Psoas muscle (tissue), 8 donors: ENCODE measurements at regions of chr18 and their contacts with region 1.

Region 1: GRCh38 chr18:13221869-13222855 is 3.6 kb downstream of the LDLRAD4 start:
- DNase-seq: peak; percentile 67 to 82
- ATAC-seq: peak; percentile 43 to 57 (median 52)
- H3K4me3 ChIP-seq: peak overlapping the region; percentile 92
- H3K27ac ChIP-seq: peak overlapping the region; percentile 83
- H3K4me1 ChIP-seq: peaks cover 56% of the 10 kb centered on the region
- H3K27me3 ChIP-seq: no peaks in the 10 kb centered on the region
- CTCF ChIP-seq: no peak

Region 2: DNA sequence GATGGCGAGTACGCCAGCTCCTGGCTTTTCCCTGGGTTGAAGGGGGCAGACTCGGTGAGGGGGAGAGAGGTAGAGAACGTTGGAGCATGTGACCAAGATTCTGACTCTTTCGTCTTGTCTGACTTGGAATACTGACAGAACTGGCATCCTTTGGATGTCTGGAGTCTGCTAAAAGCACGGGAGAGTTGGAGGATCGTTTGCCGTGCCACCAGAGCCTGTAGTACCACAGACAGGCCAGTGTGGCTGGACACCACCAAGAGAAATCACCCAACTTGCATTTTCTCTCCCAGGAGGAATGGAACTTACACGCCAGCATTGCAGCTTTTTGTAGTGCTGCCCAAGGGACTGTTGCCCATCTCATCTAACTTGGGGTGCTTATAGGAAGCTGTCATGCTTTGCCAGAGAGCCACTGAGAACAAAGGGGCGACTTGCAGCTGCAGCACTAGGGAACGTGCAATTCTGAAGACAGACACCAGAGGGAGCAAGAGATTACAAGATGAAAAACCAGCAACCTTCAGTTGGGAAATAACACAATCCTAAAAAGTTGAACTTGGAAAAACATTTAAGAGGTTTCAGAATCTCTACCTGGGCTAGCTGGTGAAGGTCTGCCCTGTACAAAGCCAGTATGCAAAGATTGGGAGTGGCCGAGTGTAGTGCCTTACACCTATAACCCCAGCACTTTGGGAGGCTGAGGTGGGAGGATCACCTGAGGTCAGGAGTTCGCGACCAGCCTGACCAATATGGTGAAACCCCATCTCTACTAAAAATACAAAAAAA is 495.2 kb before region 1 on chr18:
- intact Hi-C with region 1: no loop called
- DNase-seq: no peak
- ATAC-seq: peak; percentile 62 to 83 (median 72)
- H3K4me3 ChIP-seq: no peak overlapping the region
- H3K27ac ChIP-seq: no peak overlapping the region
- H3K4me1 ChIP-seq: no peaks in the 10 kb centered on the region
- H3K27me3 ChIP-seq: no peaks in the 10 kb centered on the region
- CTCF ChIP-seq: peak; percentile 94

Region 3: GRCh38 chr18:13260197-13260934 is 38.2 kb after region 1 on chr18:
- intact Hi-C with region 1: loop called in 1 of 2 experiments (anchors 5 kb)
- DNase-seq: no peak
- ATAC-seq: peak; percentile 33 to 70 (median 62)
- H3K4me3 ChIP-seq: no peak overlapping the region
- H3K27ac ChIP-seq: peak overlapping the region; percentile 58
- H3K4me1 ChIP-seq: peaks cover 60% of the 10 kb centered on the region
- H3K27me3 ChIP-seq: no peaks in the 10 kb centered on the region
- CTCF ChIP-seq: no peak

Region 4: GRCh38 chr18:13375302-13376255 is 153.4 kb after region 1 on chr18:
- intact Hi-C with region 1: loop called (anchors 2 to 10 kb)
- DNase-seq: peak; percentile 79 to 84
- ATAC-seq: peak; percentile 67 to 71 (median 67)
- H3K4me3 ChIP-seq: no peak overlapping the region
- H3K27ac ChIP-seq: peak overlapping the region; percentile 70
- H3K4me1 ChIP-seq: peaks cover 51% of the 10 kb centered on the region
- H3K27me3 ChIP-seq: no peaks in the 10 kb centered on the region
- CTCF ChIP-seq: no peak

Region 5: DNA sequence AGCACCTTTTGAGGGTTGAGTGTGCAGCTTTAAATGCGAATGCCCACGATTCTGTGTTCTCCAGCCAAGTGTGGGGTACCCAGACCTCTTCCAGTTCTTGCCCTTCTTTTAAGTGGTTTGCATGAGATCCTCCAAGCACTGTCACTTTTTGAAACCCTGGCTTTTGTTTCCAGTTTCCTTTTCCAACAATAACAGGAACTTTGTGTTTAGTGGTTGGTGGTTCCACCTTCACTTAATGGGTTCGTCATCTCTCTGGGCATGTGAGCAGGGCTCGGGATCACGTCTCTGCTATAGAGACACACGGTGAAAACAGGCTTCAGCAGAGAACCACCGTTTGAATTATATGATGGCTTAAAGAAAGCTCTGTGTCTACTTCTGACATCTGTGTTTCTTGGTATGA is 194.0 kb after region 1 on chr18:
- intact Hi-C with region 1: loop called in 1 of 2 experiments (anchors 10 kb)
- DNase-seq: no peak
- ATAC-seq: peak in 1 of 4 donors; percentile 22
- H3K4me3 ChIP-seq: peak overlapping the region; percentile 8
- H3K27ac ChIP-seq: peak overlapping the region; percentile 7
- H3K4me1 ChIP-seq: peaks cover 37% of the 10 kb centered on the region
- H3K27me3 ChIP-seq: no peaks in the 10 kb centered on the region
- CTCF ChIP-seq: no peak

Region 6: DNA sequence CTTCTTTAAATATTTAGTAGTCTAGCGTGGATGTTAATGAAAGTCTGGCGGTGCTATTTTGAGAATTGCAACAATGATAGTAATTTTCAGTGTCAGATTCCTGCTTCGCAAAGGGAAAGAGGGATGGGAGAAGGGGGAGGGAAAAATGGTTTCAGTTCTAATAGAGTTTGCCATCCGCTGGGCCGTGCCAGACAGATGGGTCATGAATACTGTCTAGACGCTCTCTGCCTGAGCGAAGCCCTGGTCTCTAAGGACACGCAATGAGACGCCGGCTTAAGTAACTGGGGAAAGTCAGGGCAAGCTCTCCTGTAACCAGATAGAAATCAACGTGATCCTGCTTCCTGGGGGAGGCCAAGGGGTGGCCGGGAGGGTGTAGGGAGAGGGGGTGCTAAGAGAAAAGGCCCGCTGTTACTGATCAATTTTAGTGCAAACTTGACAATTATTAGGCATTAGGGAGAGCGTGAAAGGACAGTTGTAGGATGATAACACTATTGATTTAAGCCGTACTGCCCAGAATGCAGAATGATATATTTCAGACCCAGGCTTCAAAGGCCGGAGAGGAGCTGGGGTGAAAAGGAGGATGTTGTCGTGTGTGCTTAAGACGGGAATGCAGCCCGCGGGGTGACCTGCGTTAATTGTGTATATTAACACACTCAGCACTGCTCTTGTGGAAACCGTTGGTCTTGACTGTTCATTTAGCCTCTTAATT is 225.6 kb after region 1 on chr18:
- intact Hi-C with region 1: loop called (anchors 5 to 10 kb)
- DNase-seq: peak; percentile 71 to 82
- ATAC-seq: peak; percentile 87 to 91 (median 89)
- H3K4me3 ChIP-seq: peak overlapping the region; percentile 40
- H3K27ac ChIP-seq: peak overlapping the region; percentile 28
- H3K4me1 ChIP-seq: peaks cover 46% of the 10 kb centered on the region
- H3K27me3 ChIP-seq: no peaks in the 10 kb centered on the region
- CTCF ChIP-seq: no peak

Region 7: GRCh38 chr18:13513021-13513420 is 290.9 kb after region 1 on chr18:
- intact Hi-C with region 1: loop called in 1 of 2 experiments (anchors 2 kb)
- DNase-seq: peak; percentile 34 to 81
- ATAC-seq: peak; percentile 96 to 98 (median 98)
- H3K4me3 ChIP-seq: no peak overlapping the region
- H3K27ac ChIP-seq: peak overlapping the region; percentile 88
- H3K4me1 ChIP-seq: peaks cover 64% of the 10 kb centered on the region
- H3K27me3 ChIP-seq: no peaks in the 10 kb centered on the region
- CTCF ChIP-seq: no peak

Region 8: DNA sequence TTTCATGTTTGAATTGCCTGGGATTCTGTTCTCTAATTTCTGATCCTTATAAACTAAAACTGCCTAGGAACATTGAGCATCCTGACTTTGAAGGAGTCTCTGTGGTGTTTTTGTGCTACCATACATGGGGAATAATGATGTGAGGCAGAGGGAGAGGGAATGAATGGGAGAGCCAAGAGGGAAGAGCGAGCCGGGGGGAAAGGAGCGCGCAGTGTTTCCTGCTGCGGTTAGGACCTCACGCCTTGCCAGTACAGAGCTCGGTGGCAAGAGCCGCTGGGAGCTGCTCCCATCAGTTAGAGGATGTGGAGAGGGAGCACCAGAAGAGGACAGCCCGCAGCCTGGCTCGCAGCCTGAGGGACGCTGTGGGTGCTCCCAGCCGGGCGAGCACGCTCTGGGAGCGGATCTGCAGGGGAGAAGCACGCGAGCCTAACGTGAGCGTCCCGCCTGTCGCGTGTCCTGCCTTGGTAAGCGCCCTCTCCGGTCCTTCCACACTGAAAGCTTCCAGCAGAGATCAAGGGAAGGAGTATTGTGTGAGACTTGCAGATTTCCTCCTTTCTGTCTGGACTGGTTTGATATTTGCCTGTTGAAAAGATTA is 389.5 kb after region 1 on chr18:
- intact Hi-C with region 1: loop called in 1 of 2 experiments (anchors 5 kb)
- DNase-seq: peak; percentile 44 to 71
- ATAC-seq: peak; percentile 55 to 67 (median 60)
- H3K4me3 ChIP-seq: peak overlapping the region; percentile 68
- H3K27ac ChIP-seq: peak overlapping the region; percentile 81
- H3K4me1 ChIP-seq: peaks cover 26% of the 10 kb centered on the region
- H3K27me3 ChIP-seq: no peaks in the 10 kb centered on the region
- CTCF ChIP-seq: no peak